GM12878 (cell line): ENCODE measurements at regions of chr10 and their contacts with region 1.

Region 1: GRCh38 chr10:102713814-102714620 is at the start of gene ARL3:
- DNase-seq: peak; percentile 94
- ATAC-seq: peak; percentile 84
- H3K4me3 ChIP-seq: peak within 1 kb of the TSS; percentile 92
- H3K27ac ChIP-seq: peak within 1 kb of the TSS; percentile 88
- H3K4me1 ChIP-seq: peaks cover 17% of the 10 kb centered on the region
- H3K27me3 ChIP-seq: no peaks in the 10 kb centered on the region
- CTCF ChIP-seq: peak in 1 of 3 experiments; percentile 65; a peak in 2 of 6 replicates
- EP300 ChIP-seq: no peak
- POLR2A ChIP-seq: peak; percentile 74
- RAD21 ChIP-seq: peak; percentile 20; the same call in 1 of the 2 replicates
- polyA plus RNA-seq, gene ARL3: 21.0 to 26.1 TPM

Region 2: DNA sequence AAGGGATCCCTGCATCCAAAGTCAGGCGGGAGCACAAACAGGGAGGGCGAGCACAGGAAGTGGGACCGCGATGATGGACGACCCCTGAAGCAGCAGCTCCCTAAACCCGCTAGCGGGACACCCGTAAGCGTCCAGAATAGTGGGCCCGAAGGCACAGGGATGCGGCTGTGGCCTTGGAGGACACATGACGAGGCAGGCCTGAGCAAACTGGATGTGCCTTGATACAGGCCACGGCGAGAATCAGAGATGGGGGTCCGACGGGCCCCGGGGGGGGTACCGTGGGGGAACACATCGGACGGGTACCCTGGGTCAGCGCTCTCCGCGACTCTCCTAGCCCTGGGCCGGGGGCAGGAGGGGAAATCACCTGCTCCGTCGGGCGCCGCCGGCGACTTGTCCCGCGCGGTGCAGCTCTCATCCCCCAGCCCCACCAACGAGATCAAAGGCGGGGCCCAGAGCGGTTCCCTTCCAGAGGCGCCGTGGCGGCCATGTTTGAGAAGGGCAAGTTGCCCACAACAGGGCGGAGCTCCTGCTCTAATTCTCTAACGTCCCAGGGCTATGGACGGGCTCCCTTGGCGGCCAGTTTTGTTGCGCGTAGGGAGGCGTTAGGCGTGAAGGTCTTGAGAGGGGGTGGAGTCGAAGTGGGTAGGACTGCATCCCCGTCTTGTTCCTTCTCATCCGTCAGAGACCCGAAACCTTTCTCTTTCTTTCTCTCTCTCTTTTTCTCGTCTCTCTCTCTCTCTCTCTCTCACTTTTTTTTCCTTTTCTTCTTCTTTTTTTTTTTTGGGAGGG is 281.7 kb before region 1 on chr10 and contains the start of gene CUEDC2:
- CTCF ChIA-PET with region 1: no interaction called
- POLR2A ChIA-PET with region 1: no interaction called
- RAD21 ChIA-PET with region 1: interaction called, 3 read pairs
- SMC1A ChIA-PET with region 1: no interaction called
- in situ Hi-C with region 1: no loop called
- intact Hi-C with region 1: loop called (anchors 5 kb)
- DNase-seq: peak; percentile 88
- ATAC-seq: peak; percentile 95
- H3K4me3 ChIP-seq: peak within 1 kb of the TSS; percentile 93
- H3K27ac ChIP-seq: peak within 1 kb of the TSS; percentile 90
- H3K4me1 ChIP-seq: peaks cover 22% of the 10 kb centered on the region
- H3K27me3 ChIP-seq: no peaks in the 10 kb centered on the region
- CTCF ChIP-seq: no peak
- EP300 ChIP-seq: no peak; a peak in 1 of 4 replicates
- POLR2A ChIP-seq: peak; percentile 85
- RAD21 ChIP-seq: no peak
- polyA plus RNA-seq, gene CUEDC2: 20.4 to 45.2 TPM

Region 3: GRCh38 chr10:102604379-102604960 is 109.5 kb before region 1 on chr10:
- CTCF ChIA-PET with region 1: interaction called, 3 read pairs
- POLR2A ChIA-PET with region 1: interaction called, 13 read pairs
- RAD21 ChIA-PET with region 1: interaction called, 3 read pairs
- SMC1A ChIA-PET with region 1: interaction called, 4 read pairs
- in situ Hi-C with region 1: no loop called
- intact Hi-C with region 1: no loop called
- DNase-seq: no peak
- ATAC-seq: peak; percentile 62
- H3K4me3 ChIP-seq: no peak overlapping the region
- H3K27ac ChIP-seq: no peak overlapping the region
- H3K4me1 ChIP-seq: peaks cover 6% of the 10 kb centered on the region
- H3K27me3 ChIP-seq: no peaks in the 10 kb centered on the region
- CTCF ChIP-seq: no peak
- EP300 ChIP-seq: no peak
- POLR2A ChIP-seq: no peak
- RAD21 ChIP-seq: no peak

Region 4: GRCh38 chr10:102652170-102652916 is 61.7 kb before region 1 on chr10:
- CTCF ChIA-PET with region 1: interaction called, 4 read pairs
- POLR2A ChIA-PET with region 1: interaction called, 73 read pairs
- RAD21 ChIA-PET with region 1: interaction called, 59 read pairs
- SMC1A ChIA-PET with region 1: interaction called, 55 read pairs
- in situ Hi-C with region 1: no loop called
- intact Hi-C with region 1: loop called (anchors 2 kb)
- DNase-seq: peak; percentile 75
- ATAC-seq: peak; percentile 61
- H3K4me3 ChIP-seq: peak overlapping the region; percentile 62
- H3K27ac ChIP-seq: peak overlapping the region; percentile 96
- H3K4me1 ChIP-seq: peaks cover 56% of the 10 kb centered on the region
- H3K27me3 ChIP-seq: no peaks in the 10 kb centered on the region
- CTCF ChIP-seq: no peak
- EP300 ChIP-seq: peak in 1 of 2 experiments; percentile 44; a peak in 2 of 4 replicates
- POLR2A ChIP-seq: no peak
- RAD21 ChIP-seq: no peak

Region 5: DNA sequence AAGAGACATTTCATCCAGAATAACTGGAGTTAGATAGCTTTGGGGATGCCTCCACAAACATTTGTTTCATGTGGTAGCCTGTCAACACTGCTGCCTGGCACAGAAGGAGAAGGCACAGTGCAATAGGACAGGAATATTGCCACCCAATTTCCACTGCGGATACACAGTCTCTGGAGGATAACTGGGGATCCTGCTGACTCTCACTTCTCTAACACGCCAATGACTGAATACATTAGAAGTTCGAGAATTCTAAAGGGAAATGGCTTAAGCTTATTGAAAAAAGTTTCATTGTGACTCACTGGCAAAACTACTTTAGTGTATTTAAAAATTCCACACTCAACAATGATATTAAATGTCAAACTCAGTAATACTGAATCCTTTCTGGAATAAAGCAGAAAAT is 12.7 kb before region 1 on chr10:
- CTCF ChIA-PET with region 1: interaction called, 7 read pairs
- POLR2A ChIA-PET with region 1: interaction called, 21 read pairs
- RAD21 ChIA-PET with region 1: interaction called, 7 read pairs
- SMC1A ChIA-PET with region 1: interaction called, 10 read pairs
- in situ Hi-C with region 1: no loop called
- intact Hi-C with region 1: no loop called
- DNase-seq: no peak
- ATAC-seq: peak; percentile 65
- H3K4me3 ChIP-seq: no peak overlapping the region
- H3K27ac ChIP-seq: peak overlapping the region; percentile 24
- H3K4me1 ChIP-seq: peaks cover 6% of the 10 kb centered on the region
- H3K27me3 ChIP-seq: no peaks in the 10 kb centered on the region
- CTCF ChIP-seq: no peak
- EP300 ChIP-seq: no peak
- POLR2A ChIP-seq: no peak
- RAD21 ChIP-seq: no peak